Activated CD8-positive, alpha-beta T cell treated with anti-CD3 and anti-CD28 coated beads, Interleukin-2, amount 10 ng/mL, durations not matched to agents 7 days and 5 days (primary cell): ENCODE measurements at regions of chr9 and their contacts with region 1.

Region 1: GRCh38 chr9:133485361-133486260 is 6.7 kb upstream of the SLC2A6 start:
- DNase-seq: peak; percentile 54
- ATAC-seq: peak; percentile 74
- H3K4me3 Mint-ChIP-seq: peak overlapping the region; percentile 53
- H3K27ac Mint-ChIP-seq: peak overlapping the region; percentile 83
- H3K4me1 Mint-ChIP-seq: peaks cover 13% of the 10 kb centered on the region
- H3K27me3 Mint-ChIP-seq: peaks cover 15% of the 10 kb centered on the region

Region 2: DNA sequence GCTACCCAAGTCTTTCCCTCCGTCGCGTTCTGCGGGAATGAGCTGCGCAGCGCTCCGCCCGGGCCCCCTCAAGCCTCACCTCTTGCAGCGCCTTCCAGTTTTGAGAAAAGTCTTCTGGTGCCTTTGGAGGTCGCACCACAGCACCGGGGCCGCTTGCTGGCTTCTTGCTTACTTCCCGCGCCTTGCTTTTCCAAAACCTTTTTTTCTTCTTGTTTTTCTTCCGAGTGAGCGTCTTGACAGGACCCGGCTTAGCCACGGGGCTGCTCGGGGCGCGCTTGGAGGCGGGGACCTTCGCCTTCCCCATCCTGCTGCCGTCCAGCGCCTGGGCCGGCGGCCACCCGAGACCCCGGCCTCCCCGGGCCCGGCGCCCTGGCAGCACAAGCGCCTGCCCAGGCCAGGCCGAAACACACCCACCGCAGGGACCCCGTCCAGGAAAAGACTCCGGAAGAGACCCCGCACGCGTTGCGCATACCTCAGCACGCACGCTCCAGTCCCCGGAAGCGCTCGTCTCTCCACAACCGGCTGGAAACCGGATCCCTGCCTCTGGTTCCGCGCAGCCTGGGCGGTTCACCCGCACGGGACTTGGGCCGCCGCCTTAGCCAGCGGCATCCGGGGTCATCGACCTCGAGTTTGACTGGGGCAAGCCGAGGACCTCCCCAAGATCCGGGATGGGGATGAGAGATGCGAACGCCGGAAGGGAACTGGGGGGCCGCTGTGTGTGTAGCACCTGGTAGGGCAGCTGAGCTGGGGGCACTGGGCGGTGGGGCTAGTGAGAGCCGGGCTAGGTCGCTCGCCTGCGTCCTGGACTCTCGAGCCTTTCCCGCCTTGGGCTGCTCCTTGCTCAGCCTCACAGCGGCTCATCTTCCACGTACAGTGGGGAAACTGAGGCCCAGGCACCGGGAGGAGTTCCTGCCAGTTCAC is 67.8 kb before region 1 on chr9 and contains the start of gene REXO4:
- CTCF ChIA-PET with region 1: interaction called, 10 read pairs
- POLR2A ChIA-PET with region 1: interaction called, 4 read pairs
- DNase-seq: peak; percentile 92
- ATAC-seq: peak; percentile 92
- H3K4me3 Mint-ChIP-seq: peak within 1 kb of the TSS; percentile 93
- H3K27ac Mint-ChIP-seq: peak within 1 kb of the TSS; percentile 95
- H3K4me1 Mint-ChIP-seq: peaks cover 64% of the 10 kb centered on the region
- H3K27me3 Mint-ChIP-seq: no peaks in the 10 kb centered on the region
- total RNA-seq, gene REXO4: 23.6 to 25.7 TPM

Region 3: DNA sequence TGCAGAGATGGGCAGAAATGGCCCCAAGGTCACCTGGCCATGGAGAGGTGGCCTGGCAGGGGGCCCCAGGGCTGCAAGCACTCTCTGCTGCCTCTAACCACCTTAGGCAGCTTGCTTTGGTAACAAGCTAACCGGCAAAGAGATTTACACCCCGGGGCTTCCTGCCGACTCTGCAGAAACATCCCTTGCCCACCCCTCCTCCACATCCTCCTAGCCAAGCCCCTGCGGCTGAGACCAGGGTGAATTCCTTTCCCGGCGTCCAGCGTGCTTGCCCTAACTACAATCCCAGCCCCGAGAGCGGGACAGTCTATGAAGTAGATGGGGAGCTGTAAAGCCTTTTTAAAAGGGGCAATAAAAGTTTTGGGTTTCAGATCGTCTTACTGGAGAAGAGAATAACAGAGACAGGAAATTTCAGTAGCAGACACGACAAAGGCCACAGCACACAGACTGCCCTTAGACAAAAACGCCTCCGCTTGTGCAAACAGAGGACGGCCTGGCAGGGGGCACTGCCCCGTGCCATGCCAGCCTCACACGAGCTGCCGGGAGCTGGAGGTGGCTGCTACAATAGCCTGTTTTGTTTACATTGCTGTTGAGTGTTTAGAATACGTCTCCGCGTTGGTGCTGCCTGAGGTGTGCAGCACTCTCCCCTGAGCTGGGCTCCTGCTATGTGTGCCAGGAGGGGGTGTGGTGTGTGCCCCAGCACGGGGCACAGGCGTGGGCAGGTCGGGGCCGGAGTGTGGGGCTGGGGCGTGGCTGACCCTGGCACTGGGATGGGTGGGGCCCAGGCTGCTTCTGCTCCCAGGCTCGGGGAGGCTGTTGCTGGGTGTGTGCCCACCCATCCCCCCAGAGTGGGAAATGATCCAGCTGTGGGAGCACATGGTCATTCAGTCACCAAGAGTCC is 23.8 kb after region 1 on chr9:
- CTCF ChIA-PET with region 1: interaction called, 11 read pairs
- POLR2A ChIA-PET with region 1: interaction called, 4 read pairs
- DNase-seq: peak; percentile 64
- ATAC-seq: peak; percentile 74
- H3K4me3 Mint-ChIP-seq: peak overlapping the region; percentile 65
- H3K27ac Mint-ChIP-seq: peak overlapping the region; percentile 89
- H3K4me1 Mint-ChIP-seq: peaks cover 17% of the 10 kb centered on the region
- H3K27me3 Mint-ChIP-seq: no peaks in the 10 kb centered on the region